Transverse colon (tissue), 4 donors: ENCODE measurements at regions of chr3 and their contacts with region 1.

Region 1: DNA sequence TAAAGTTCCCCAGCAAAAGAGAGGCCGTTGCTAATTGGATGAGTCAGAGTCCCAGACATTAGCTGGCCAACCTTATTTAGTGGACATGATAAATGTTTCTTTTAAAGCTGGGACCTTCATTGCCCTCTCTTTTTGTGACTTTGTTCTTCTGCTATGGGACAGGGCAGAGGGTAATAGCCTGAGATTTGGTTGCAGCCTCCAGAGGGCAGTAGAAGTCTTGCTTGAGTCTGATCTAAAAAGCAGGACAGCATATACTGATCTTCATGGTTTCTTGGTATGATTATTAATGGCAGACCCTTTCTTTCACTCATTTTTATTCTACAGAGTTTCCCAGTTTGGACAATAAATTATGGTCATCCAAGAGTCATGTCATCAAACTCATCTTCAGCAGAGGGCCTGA is 25.1 kb upstream of the ZKSCAN7 start:
- DNase-seq: no peak
- H3K4me3 ChIP-seq: no peak overlapping the region
- H3K27ac ChIP-seq: peak overlapping the region in 1 of 4 donors; percentile 26
- H3K4me1 ChIP-seq: peaks cover 0 to 17% (median 6%) of the 10 kb centered on the region in 4 donors
- H3K27me3 ChIP-seq: no peaks in the 10 kb centered on the region
- CTCF ChIP-seq: peak in 2 of 5 experiments; percentile 13 to 26
- EP300 ChIP-seq: no peak
- POLR2A ChIP-seq: no peak

Region 2: DNA sequence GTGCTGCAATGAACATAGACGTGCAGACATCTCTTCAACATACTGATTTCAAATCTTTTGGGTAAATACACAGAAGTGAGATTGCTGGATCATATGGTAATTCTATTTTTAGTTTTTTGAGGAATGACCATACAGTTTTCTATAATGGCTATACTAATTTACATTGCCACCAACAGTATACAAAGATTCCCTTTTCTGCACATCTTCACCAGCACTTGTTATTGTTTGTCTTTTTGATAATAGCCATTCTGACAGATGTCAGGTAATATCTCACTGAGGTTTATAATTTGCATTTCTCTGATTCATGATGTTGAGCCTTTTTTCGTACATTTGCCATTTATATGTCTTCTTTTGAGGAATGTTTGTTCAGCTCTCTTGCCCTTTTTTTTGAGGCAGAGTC is 257.7 kb before region 1 on chr3:
- in situ Hi-C with region 1: no loop called
- intact Hi-C with region 1: no loop called
- DNase-seq: no peak
- H3K4me3 ChIP-seq: no peak overlapping the region
- H3K27ac ChIP-seq: no peak overlapping the region
- H3K4me1 ChIP-seq: no peaks in the 10 kb centered on the region
- H3K27me3 ChIP-seq: no peaks in the 10 kb centered on the region
- CTCF ChIP-seq: no peak
- EP300 ChIP-seq: no peak
- POLR2A ChIP-seq: no peak

Region 3: DNA sequence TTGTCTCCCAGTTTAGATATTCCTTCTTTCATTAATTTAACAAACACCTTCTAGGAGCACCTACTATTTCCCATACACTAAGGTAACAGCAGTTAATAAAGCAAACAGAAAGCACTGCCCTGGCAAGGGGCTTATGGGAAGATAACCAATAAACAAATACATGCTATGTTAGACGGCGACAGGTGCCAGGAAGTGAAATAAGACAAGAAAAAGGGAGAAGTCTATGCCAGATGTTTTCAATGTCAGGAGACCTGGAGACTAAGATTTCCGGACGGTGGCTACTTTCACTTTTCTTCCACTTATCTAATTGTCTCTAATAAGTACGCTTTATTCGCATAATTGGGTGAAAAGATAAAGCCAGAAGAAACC is 19.9 kb before region 1 on chr3:
- in situ Hi-C with region 1: no loop called
- intact Hi-C with region 1: no loop called
- DNase-seq: no peak
- H3K4me3 ChIP-seq: peak overlapping the region; percentile 59 to 97 (median 92)
- H3K27ac ChIP-seq: peak overlapping the region; percentile 89 to 96 (median 92)
- H3K4me1 ChIP-seq: peaks cover 6 to 27% (median 15%) of the 10 kb centered on the region in 4 donors
- H3K27me3 ChIP-seq: no peaks in the 10 kb centered on the region
- CTCF ChIP-seq: no peak
- EP300 ChIP-seq: no peak
- POLR2A ChIP-seq: no peak

Region 4: GRCh38 chr3:44833394-44833793 is 303.5 kb after region 1 on chr3:
- in situ Hi-C with region 1: no loop called
- intact Hi-C with region 1: no loop called
- DNase-seq: no peak
- H3K4me3 ChIP-seq: no peak overlapping the region
- H3K27ac ChIP-seq: no peak overlapping the region
- H3K4me1 ChIP-seq: no peaks in the 10 kb centered on the region
- H3K27me3 ChIP-seq: no peaks in the 10 kb centered on the region
- CTCF ChIP-seq: no peak
- EP300 ChIP-seq: no peak
- POLR2A ChIP-seq: no peak

Region 5: DNA sequence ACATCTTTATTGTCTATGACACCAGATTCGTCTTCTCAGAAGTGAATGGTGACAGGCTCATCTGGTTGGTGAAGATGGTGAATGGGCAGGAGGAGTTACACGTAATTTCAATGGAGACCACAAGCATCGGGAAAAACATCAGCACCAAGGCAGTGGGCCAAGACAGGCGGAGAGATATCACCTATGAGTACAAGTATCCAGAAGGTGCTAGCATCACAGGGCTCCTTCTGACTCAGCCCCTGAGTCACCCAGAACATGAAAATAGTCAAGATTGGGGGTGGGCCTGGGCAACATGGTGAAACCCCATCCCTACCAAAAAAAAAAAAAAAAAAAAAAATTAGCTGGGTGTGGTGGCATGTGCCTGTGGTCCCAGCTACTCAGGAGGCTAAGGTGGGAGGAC is 377.1 kb after region 1 on chr3:
- in situ Hi-C with region 1: loop called (anchors 10 to 25 kb)
- intact Hi-C with region 1: loop called (anchors 10 kb)
- DNase-seq: no peak
- H3K4me3 ChIP-seq: no peak overlapping the region
- H3K27ac ChIP-seq: no peak overlapping the region
- H3K4me1 ChIP-seq: no peaks in the 10 kb centered on the region
- H3K27me3 ChIP-seq: peaks cover 13% of the 10 kb centered on the region
- CTCF ChIP-seq: no peak
- EP300 ChIP-seq: no peak
- POLR2A ChIP-seq: no peak

Region 6: GRCh38 chr3:44913868-44914468 is 384.0 kb after region 1 on chr3:
- in situ Hi-C with region 1: loop called (anchors 10 to 25 kb)
- intact Hi-C with region 1: loop called (anchors 10 kb)
- DNase-seq: peak; percentile 72
- H3K4me3 ChIP-seq: no peak overlapping the region
- H3K27ac ChIP-seq: no peak overlapping the region
- H3K4me1 ChIP-seq: no peaks in the 10 kb centered on the region
- H3K27me3 ChIP-seq: peaks cover 7% of the 10 kb centered on the region
- CTCF ChIP-seq: peak; percentile 71 to 80 (median 72)
- EP300 ChIP-seq: no peak
- POLR2A ChIP-seq: no peak